Heart right ventricle (tissue), 16 donors: ENCODE measurements at regions of chr21 and their contacts with region 1.

Region 1: GRCh38 chr21:36325373-36326010 is 5.5 kb downstream of the MORC3 start:
- DNase-seq: no peak
- ATAC-seq: no peak
- H3K4me3 ChIP-seq: no peak overlapping the region
- H3K27ac ChIP-seq: peak overlapping the region in 2 of 10 donors; percentile 99
- H3K4me1 ChIP-seq: peaks cover 3 to 86% (median 70%) of the 10 kb centered on the region in 9 donors
- H3K27me3 ChIP-seq: no peaks in the 10 kb centered on the region
- CTCF ChIP-seq: no peak

Region 2: DNA sequence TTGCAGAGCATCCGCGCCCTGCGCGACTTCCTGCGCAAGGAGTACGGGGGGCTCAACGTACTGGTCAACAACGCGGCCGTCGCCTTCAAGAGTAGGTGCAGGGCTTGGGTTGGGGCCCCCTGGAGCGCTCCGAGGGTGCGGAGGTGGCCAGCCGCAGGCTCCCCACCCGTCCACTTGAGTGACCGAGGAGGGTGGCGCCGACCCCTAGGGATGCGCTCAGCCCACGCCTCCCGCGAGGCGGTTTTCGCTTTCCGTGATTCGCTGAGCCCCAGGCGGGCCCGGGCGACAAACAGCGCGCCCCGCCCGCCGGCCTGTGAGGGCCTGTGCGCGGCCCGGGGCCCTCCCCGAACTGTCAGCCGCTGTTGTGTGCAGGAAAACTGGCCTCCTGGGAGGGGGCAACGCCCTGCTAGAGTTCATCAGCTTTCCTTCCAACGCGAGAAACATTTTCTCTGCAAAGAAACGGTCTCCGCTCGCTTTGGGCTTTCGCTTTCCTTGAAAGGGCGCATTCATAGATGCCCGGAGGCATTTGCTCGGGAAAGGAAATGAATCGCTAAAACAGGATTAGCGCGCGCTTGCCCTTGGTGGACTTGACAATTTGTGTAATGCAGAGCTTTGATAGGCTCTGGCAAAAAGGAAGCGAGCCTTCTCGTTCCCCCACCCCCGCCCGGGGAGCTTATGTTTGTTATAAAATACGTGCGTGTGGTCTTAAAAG is 189.9 kb before region 1 on chr21:
- intact Hi-C with region 1: loop called in 9 of 10 experiments (anchors 2 to 10 kb)
- DNase-seq: peak; percentile 73 to 83
- ATAC-seq: peak; percentile 87 to 92 (median 90)
- H3K4me3 ChIP-seq: peak overlapping the region; percentile 42 to 80 (median 68)
- H3K27ac ChIP-seq: peak overlapping the region; percentile 78 to 95 (median 90)
- H3K4me1 ChIP-seq: peaks cover 2 to 44% (median 24%) of the 10 kb centered on the region in 9 donors
- H3K27me3 ChIP-seq: peaks cover 0 to 4% (median 0%) of the 10 kb centered on the region in 7 donors
- CTCF ChIP-seq: no peak

Region 3: GRCh38 chr21:36149788-36150711 is 175.4 kb before region 1 on chr21:
- intact Hi-C with region 1: loop called in 6 of 10 experiments (anchors 5 to 10 kb)
- DNase-seq: peak in 1 of 2 donors; percentile 48
- ATAC-seq: peak; percentile 79 to 92 (median 88)
- H3K4me3 ChIP-seq: peak overlapping the region in 1 of 10 donors; percentile 8
- H3K27ac ChIP-seq: peak overlapping the region; percentile 30 to 91 (median 71)
- H3K4me1 ChIP-seq: peaks cover 4 to 22% (median 18%) of the 10 kb centered on the region in 9 donors
- H3K27me3 ChIP-seq: no peaks in the 10 kb centered on the region
- CTCF ChIP-seq: no peak